ENCODE measurements at regions of chr5 and their contacts with region 1.

Region 1: GRCh38 chr5:7886849-7887475 is 18.0 kb downstream of the MTRR start:
- DNase-seq: peak in 1 of 35 experiments; percentile 57
- ATAC-seq: no peak
- H3K4me3 ChIP-seq: no peak overlapping the region
- H3K4me3 Mint-ChIP-seq: no peak overlapping the region
- H3K27ac ChIP-seq: no peak overlapping the region
- H3K27ac Mint-ChIP-seq: no peak overlapping the region
- H3K4me1 ChIP-seq: no peaks in the 10 kb centered on the region
- H3K4me1 Mint-ChIP-seq: peaks cover 7 to 12% (median 11%) of the 10 kb centered on the region in 3 donors
- H3K27me3 ChIP-seq: no peaks in the 10 kb centered on the region
- H3K27me3 Mint-ChIP-seq: no peaks in the 10 kb centered on the region

Region 2: DNA sequence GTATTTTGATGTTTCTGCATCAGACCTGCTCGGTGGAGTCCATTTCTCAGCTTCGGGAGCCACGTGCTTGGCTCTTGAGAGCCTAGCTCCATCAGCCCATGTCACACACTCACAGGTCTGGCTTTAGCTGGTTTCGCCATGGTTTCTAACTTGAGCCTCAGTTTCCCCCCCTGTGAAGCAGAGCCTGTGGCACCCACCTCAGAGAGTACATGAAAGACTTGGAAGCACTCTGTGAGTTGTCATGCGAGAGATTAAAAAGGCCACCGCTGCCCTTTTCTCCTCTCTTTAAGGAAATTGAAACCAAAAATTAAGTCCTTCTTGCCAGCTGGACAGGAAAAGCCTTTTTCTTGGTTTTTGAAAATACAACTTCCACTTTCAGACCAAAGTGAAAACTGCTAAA is 1164.9 kb before region 1 on chr5:
- CTCF ChIA-PET with region 1: no interaction called
- POLR2A ChIA-PET with region 1: interaction called in 1 of 2 experiments, 10 read pairs
- DNase-seq: peak in 1 of 35 experiments; percentile 11
- ATAC-seq: peak in 1 of 4 experiments; percentile 15
- H3K4me3 ChIP-seq: no peak overlapping the region
- H3K4me3 Mint-ChIP-seq: peak overlapping the region; percentile 36 to 59 (median 50)
- H3K27ac ChIP-seq: no peak overlapping the region
- H3K27ac Mint-ChIP-seq: peak overlapping the region; percentile 27 to 66
- H3K4me1 ChIP-seq: peaks cover 2 to 70% of the 10 kb centered on the region in 2 experiments
- H3K4me1 Mint-ChIP-seq: peaks cover 95 to 98% (median 96%) of the 10 kb centered on the region in 3 donors
- H3K27me3 ChIP-seq: no peaks in the 10 kb centered on the region
- H3K27me3 Mint-ChIP-seq: no peaks in the 10 kb centered on the region

Region 3: GRCh38 chr5:7868773-7869473 is 18.0 kb before region 1 on chr5 and contains the starts of genes FASTKD3 and MTRR:
- CTCF ChIA-PET with region 1: interaction called, 5 to 14 read pairs
- POLR2A ChIA-PET with region 1: interaction called in 1 of 2 experiments, 3 read pairs
- DNase-seq: peak; percentile 72 to 94 (median 87)
- ATAC-seq: peak; percentile 99 to 100 (median 99)
- H3K4me3 ChIP-seq: peak within 1 kb of the TSS; percentile 68 to 92
- H3K4me3 Mint-ChIP-seq: peak within 1 kb of the TSS; percentile 91 to 97 (median 92)
- H3K27ac ChIP-seq: peak within 1 kb of the TSS; percentile 56
- H3K27ac Mint-ChIP-seq: peak within 1 kb of the TSS; percentile 85 to 93
- H3K4me1 ChIP-seq: peaks cover 24 to 30% of the 10 kb centered on the region in 2 experiments
- H3K4me1 Mint-ChIP-seq: peaks cover 70 to 81% (median 79%) of the 10 kb centered on the region in 3 donors
- H3K27me3 ChIP-seq: no peaks in the 10 kb centered on the region
- H3K27me3 Mint-ChIP-seq: no peaks in the 10 kb centered on the region
- total RNA-seq, gene FASTKD3: 6.9 to 11.1 (median 9.7) TPM
- total RNA-seq, gene MTRR: 66.9 to 90.2 (median 83.0) TPM

Region 4: GRCh38 chr5:7876867-7877266 is 10.1 kb before region 1 on chr5:
- CTCF ChIA-PET with region 1: interaction called, 5 to 13 read pairs
- POLR2A ChIA-PET with region 1: no interaction called
- DNase-seq: no peak
- ATAC-seq: no peak
- H3K4me3 ChIP-seq: no peak overlapping the region
- H3K4me3 Mint-ChIP-seq: no peak overlapping the region
- H3K27ac ChIP-seq: no peak overlapping the region
- H3K27ac Mint-ChIP-seq: peak overlapping the region in 1 of 2 donors; percentile 25
- H3K4me1 ChIP-seq: peaks cover 2 to 10% of the 10 kb centered on the region in 2 experiments
- H3K4me1 Mint-ChIP-seq: peaks cover 60 to 75% (median 65%) of the 10 kb centered on the region in 3 donors
- H3K27me3 ChIP-seq: no peaks in the 10 kb centered on the region
- H3K27me3 Mint-ChIP-seq: no peaks in the 10 kb centered on the region

Measured in T-cell (primary cell).